ENCODE measurements at regions of chr5 and their contacts with region 1.

Region 1: DNA sequence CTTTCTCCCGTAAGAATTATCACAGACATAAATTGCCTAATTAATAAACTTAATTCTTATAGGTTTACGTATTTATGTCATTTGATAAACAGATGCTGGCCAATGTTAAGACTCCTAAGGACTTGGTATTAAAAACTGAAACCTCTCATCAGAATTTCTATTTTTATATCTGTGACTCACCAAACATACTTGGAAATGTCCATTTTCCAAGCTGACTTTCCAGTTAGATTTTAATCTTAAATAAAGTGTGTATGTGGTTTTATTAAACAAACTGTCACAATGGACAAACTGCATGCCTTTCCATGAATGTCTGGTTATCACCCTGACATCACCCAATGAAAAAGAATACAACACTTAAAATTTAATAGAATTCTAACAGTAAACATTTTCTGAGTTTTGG is 12.6 kb upstream of the COL23A1 start:
- DNase-seq: no peak
- ATAC-seq: no peak
- H3K4me3 ChIP-seq: no peak overlapping the region
- H3K27ac ChIP-seq: no peak overlapping the region
- H3K4me1 ChIP-seq: no peaks in the 10 kb centered on the region
- H3K27me3 ChIP-seq: no peaks in the 10 kb centered on the region
- CTCF ChIP-seq: no peak

Region 2: DNA sequence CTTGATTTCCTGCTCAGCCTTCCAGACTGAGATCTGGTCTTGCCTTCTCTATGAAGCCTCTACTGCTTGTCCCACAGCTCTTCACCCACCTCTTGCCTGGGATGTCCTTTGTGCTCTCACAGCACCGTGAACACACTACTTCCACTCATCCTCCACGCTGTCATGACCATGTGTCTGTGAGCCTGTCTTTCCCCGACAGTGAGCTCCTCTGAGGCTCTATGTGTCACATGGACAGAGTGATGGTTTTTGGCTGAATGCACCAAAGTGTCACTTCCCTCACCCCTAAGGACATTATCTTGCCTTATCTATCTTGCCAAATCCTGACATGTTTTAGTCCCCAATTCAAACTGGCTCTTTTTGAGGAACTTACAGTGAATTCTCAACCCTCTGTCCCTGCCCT is 381.5 kb before region 1 on chr5:
- CTCF ChIA-PET with region 1: no interaction called
- POLR2A ChIA-PET with region 1: interaction called, 14 read pairs
- in situ Hi-C with region 1: no loop called
- intact Hi-C with region 1: no loop called
- DNase-seq: no peak
- ATAC-seq: no peak
- H3K4me3 ChIP-seq: no peak overlapping the region
- H3K27ac ChIP-seq: no peak overlapping the region
- H3K4me1 ChIP-seq: no peaks in the 10 kb centered on the region
- H3K27me3 ChIP-seq: no peaks in the 10 kb centered on the region
- CTCF ChIP-seq: no peak